ENCODE measurements at regions of chr2 and their contacts with region 1.

Region 1: DNA sequence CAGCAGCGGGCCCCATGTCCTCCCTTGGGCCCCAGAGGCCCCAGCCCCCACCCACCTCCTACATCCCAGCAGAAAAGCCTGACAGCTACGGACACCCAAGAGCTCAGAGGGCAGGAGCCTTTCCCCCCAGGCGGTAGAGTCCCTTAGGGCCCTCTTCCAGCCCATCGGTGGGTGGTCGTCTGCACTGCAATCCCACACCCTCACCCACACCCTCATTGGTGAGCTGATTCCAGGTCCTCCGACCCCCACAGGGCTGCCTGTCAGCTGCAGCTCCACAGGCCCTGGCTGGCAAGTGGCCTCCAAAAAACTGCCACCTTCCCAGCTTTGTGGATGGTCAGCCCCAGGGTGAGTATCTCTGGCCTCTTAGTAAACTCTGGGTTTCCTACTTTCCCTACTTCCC is 10.5 kb downstream of the TCF23 start:
- DNase-seq: no peak
- H3K4me3 Mint-ChIP-seq: no peak overlapping the region
- H3K27ac Mint-ChIP-seq: no peak overlapping the region
- H3K4me1 Mint-ChIP-seq: no peaks in the 10 kb centered on the region
- H3K27me3 Mint-ChIP-seq: no peaks in the 10 kb centered on the region

Region 2: GRCh38 chr2:27060323-27060722 is 98.9 kb before region 1 on chr2:
- CTCF ChIA-PET with region 1: no interaction called
- POLR2A ChIA-PET with region 1: no interaction called
- DNase-seq: no peak
- H3K4me3 Mint-ChIP-seq: no peak overlapping the region
- H3K27ac Mint-ChIP-seq: no peak overlapping the region
- H3K4me1 Mint-ChIP-seq: no peaks in the 10 kb centered on the region
- H3K27me3 Mint-ChIP-seq: no peaks in the 10 kb centered on the region

Region 3: DNA sequence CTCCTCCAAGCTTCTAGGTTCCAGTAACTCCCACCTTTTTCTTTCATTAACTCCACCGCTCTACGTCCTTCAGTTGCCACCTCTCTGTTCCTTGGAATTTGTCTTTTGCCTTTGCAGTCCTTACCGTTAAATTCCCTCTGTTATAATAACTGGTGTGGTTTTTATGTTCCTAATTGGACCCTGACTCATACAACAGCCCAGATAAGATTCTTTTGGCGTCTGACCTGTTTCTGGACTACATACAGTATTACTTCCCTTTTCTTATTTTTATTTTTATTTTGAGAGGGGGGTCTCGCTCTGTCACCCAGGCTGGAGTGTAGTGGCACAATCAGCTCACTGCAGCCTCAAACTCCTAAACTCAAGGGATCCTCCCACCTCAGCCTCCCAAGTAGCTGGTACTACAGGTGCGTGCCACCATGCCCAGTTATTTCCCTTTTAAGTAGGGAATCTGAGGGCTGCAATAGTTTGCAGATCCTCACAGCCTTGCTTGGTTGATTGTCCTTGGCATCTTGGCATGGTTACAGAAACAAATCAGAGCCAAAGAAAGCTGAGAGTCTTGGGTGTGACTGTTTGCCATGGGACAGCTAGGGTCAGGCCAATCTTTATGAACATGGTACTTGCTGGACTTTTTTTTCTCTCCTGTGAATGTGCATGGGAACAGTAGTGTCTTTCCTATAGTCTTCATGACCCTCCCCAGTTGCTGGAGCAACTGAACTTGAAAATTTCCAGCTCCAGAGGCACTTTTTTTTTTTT is 11.5 kb after region 1 on chr2:
- CTCF ChIA-PET with region 1: interaction called, 11 read pairs
- POLR2A ChIA-PET with region 1: no interaction called
- DNase-seq: no peak
- H3K4me3 Mint-ChIP-seq: no peak overlapping the region
- H3K27ac Mint-ChIP-seq: no peak overlapping the region
- H3K4me1 Mint-ChIP-seq: peaks cover 7% of the 10 kb centered on the region
- H3K27me3 Mint-ChIP-seq: peaks cover 13% of the 10 kb centered on the region

Measured in activated CD4-positive, alpha-beta T cell treated with anti-CD3 and anti-CD28 coated beads, Interleukin-2, amount 10 ng/mL, durations not matched to agents 7 days and 5 days (primary cell).